Kidney (tissue), 22 donors: ENCODE measurements at regions of chr19 and their contacts with region 1.

Region 1: GRCh38 chr19:27974082-27974513 is 1238.9 kb downstream of the UQCRFS1 start:
- DNase-seq: peak in 4 of 5 donors; percentile 50 to 68 (median 60)
- H3K4me3 ChIP-seq: no peak overlapping the region
- H3K27ac ChIP-seq: no peak overlapping the region
- H3K4me1 ChIP-seq: peaks cover 0 to 3% (median 2%) of the 10 kb centered on the region in 3 donors
- H3K27me3 ChIP-seq: no peaks in the 10 kb centered on the region
- CTCF ChIP-seq: peak; percentile 62

Region 2: DNA sequence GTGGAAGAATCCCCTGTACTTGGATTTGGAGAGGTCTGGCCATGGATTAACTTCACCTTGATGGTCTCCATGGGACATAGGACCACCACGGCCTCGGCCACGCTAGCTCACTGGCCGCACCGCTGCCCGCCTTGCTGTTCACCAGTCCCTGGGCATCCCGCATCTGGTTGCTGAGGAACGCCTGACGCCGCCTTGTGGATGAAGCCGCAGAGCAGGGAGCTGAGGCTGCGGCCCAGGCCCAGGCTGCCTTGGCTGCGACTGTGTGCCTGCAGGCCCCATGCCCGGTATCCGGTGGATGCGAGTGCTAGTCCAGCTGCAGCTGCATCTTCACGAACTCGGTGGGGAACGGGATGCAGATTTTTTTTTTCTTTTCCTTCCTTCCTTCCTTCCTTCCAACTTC is 168.2 kb before region 1 on chr19:
- intact Hi-C with region 1: no loop called
- DNase-seq: no peak
- H3K4me3 ChIP-seq: no peak overlapping the region
- H3K27ac ChIP-seq: no peak overlapping the region
- H3K4me1 ChIP-seq: no peaks in the 10 kb centered on the region
- H3K27me3 ChIP-seq: no peaks in the 10 kb centered on the region
- CTCF ChIP-seq: no peak

Region 3: GRCh38 chr19:28324275-28325060 is 350.4 kb after region 1 on chr19:
- intact Hi-C with region 1: loop called (anchors 10 kb)
- DNase-seq: no peak
- H3K4me3 ChIP-seq: no peak overlapping the region
- H3K27ac ChIP-seq: no peak overlapping the region
- H3K4me1 ChIP-seq: no peaks in the 10 kb centered on the region
- H3K27me3 ChIP-seq: no peaks in the 10 kb centered on the region
- CTCF ChIP-seq: no peak